ENCODE measurements at regions of chr21 and their contacts with region 1.

Region 1: GRCh38 chr21:29181799-29182470 is 51.5 kb downstream of the MAP3K7CL start:
- DNase-seq: no peak
- ATAC-seq: peak; percentile 85
- H3K4me3 ChIP-seq: peak overlapping the region; percentile 39 to 84
- H3K27ac ChIP-seq: peak overlapping the region; percentile 90 to 99
- H3K4me1 ChIP-seq: peaks cover 3 to 11% of the 10 kb centered on the region in 2 donors
- H3K27me3 ChIP-seq: no peaks in the 10 kb centered on the region

Region 2: DNA sequence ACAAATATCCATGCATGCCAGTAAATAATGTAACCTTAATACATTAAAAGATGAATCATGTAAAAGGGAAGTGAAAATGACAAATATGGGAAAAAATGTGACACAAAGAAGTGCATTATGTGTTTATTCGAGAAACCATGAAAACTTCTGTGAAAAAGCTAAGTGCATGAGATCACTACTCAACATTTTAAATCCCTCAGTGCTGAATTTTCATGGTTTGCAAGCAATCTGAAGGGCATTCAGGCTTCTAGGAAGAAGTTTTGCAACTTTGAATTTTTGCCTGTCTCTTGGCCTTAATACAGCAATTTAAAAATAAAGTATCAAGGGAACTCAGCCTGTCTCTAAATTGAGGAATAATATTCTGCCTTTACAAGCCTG is 26.7 kb after region 1 on chr21:
- intact Hi-C with region 1: no loop called
- DNase-seq: no peak
- ATAC-seq: peak; percentile 78
- H3K4me3 ChIP-seq: no peak overlapping the region
- H3K27ac ChIP-seq: no peak overlapping the region
- H3K4me1 ChIP-seq: no peaks in the 10 kb centered on the region
- H3K27me3 ChIP-seq: no peaks in the 10 kb centered on the region

Region 3: DNA sequence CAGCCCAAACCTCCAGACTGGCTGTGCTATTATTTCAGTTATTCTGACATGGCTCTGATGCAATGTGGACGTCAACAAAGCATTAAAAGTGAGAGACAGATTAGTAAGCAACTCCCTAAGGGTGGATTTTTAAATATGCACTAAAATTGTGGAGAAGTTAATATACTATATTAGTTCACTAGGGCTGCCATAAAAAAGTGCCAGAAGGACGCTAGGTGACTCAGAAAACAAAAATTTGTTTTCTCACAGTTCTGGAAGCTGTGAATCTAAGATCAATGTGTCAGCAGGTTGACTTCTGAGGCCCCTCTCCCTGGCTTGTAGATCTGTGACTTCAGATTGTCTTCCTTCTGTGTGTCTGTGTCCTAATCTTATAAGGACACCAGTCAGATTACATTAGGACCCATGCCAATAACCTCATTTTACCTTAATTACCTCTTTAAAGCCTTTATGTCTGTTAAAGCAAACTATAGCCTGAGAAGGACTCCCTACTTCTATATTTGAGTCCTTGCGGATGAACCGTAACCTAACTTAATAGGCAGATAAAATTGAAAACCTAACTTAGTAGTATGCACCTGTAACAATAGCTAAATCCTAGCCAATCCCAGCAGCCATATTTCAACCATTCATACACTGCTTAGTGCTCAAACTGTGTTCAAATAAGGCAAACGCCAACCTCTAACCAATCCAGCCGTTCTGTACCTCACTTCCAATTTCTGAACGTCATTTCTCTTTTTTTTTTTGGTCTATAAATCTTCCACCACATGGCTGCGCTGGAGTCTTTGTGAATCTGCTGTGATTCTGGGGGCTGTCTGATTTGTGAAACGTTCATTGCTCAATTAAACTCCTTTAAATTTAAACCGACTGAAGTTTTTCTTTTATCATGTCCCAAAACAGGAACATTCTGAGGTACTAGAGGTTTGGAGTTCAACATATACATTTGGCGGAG is 50.9 kb after region 1 on chr21:
- intact Hi-C with region 1: loop called (anchors 10 kb)
- DNase-seq: no peak
- ATAC-seq: no peak
- H3K4me3 ChIP-seq: no peak overlapping the region
- H3K27ac ChIP-seq: no peak overlapping the region
- H3K4me1 ChIP-seq: peaks cover 0 to 3% of the 10 kb centered on the region in 2 donors
- H3K27me3 ChIP-seq: no peaks in the 10 kb centered on the region

Measured in aorta (tissue), 5 donors.